CD8-positive, alpha-beta T cell (primary cell): ENCODE measurements at regions of chr11 and their contacts with region 1.

Region 1: DNA sequence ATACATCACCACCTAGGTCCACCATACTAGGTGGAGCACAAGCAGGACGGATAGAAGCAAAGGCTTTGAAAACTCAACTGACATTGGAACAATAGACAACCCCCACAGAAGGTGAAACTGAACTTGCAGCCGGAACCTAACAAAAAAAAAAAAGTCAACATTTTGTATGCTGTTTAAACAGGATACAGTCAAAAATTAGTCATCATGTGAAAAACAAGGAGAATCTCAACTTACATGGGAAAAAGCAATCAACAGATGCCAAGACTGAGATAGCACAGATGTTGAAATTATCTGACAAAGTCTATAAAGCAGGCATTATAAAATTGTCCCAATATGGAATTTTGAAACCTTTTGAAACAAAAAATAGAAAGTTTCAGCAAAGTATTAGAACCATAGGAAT is 123.8 kb downstream of the RAB38 start:
- DNase-seq: no peak
- ATAC-seq: no peak
- H3K4me3 ChIP-seq: no peak overlapping the region
- H3K4me3 Mint-ChIP-seq: no peak overlapping the region
- H3K27ac ChIP-seq: no peak overlapping the region
- H3K27ac Mint-ChIP-seq: no peak overlapping the region
- H3K4me1 ChIP-seq: no peaks in the 10 kb centered on the region
- H3K4me1 Mint-ChIP-seq: no peaks in the 10 kb centered on the region
- H3K27me3 ChIP-seq: no peaks in the 10 kb centered on the region
- H3K27me3 Mint-ChIP-seq: peaks cover 5% of the 10 kb centered on the region
- CTCF ChIP-seq: no peak

Region 2: GRCh38 chr11:88068837-88069554 is 17.6 kb after region 1 on chr11:
- CTCF ChIA-PET with region 1: no interaction called
- POLR2A ChIA-PET with region 1: no interaction called
- intact Hi-C with region 1: loop called in 1 of 2 experiments (anchors 1 kb)
- DNase-seq: no peak
- ATAC-seq: no peak
- H3K4me3 ChIP-seq: no peak overlapping the region
- H3K4me3 Mint-ChIP-seq: no peak overlapping the region
- H3K27ac ChIP-seq: no peak overlapping the region
- H3K27ac Mint-ChIP-seq: no peak overlapping the region
- H3K4me1 ChIP-seq: no peaks in the 10 kb centered on the region
- H3K4me1 Mint-ChIP-seq: no peaks in the 10 kb centered on the region
- H3K27me3 ChIP-seq: no peaks in the 10 kb centered on the region
- H3K27me3 Mint-ChIP-seq: peaks cover 14% of the 10 kb centered on the region
- CTCF ChIP-seq: no peak